Activated T-helper 1 cell treated with anti-CD3 and anti-CD28 coated beads, Interleukin-12 subunit alpha, Interleukin-12 subunit beta, Interleukin-2, Interleukin-4 antibody, amounts not matched to agents 30 ng/mL and 10 ng/mL and 1 ng/mL, durations not matched to agents 14 hours and 24 hours and 36 hours (primary cell): ENCODE measurements at regions of chr17 and their contacts with region 1.

Region 1: DNA sequence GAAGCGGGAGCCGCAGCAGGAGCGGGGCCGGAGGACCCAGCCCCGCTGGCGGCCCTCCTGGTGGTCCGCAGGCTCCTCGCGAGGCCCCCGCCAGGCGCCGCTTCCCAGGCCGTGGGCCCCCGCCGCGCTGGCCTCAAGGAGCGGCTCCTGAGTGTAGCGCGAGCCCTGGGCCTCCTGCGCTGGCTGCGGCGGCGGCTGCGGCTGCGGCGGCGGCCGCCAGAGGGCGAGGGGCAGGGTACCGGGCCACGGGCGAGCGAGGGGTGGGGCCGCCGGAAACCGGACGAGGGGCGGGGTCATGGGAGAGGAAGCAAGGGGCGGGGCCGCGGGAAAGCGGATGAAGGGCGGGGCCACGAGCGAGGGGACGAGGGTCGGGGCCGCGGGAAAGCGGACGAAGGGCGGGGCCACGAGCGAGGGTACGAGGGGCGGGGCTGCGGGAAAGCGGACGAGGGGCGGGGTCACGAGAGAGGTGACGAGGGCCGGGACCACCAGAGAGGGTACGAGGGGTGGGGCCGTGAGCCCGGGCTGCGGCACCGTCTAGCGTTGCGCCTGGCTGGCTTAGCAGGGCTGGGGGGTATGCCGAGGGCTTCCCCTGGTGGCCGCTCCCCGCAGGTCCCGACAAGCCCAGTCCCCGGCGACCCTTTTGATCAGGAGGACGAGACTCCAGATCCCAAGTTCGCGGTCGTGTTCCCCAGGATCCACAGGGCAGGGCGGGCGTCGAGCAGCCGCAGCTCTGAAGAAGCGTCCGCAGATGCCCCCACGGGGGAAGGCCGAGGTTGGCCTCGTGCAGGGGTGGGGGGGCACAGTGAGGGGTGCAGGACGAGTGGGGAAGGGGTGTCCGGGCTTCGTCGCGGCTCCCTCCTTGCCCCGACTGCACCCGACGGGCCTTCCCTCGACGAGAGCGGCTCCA is 1.7 kb downstream of the MYO15B start:
- DNase-seq: peak; percentile 88
- H3K4me3 Mint-ChIP-seq: peak overlapping the region; percentile 78
- H3K27ac Mint-ChIP-seq: peak overlapping the region; percentile 77
- H3K4me1 Mint-ChIP-seq: no peaks in the 10 kb centered on the region
- H3K27me3 Mint-ChIP-seq: peaks cover 17% of the 10 kb centered on the region

Region 2: GRCh38 chr17:75430159-75430974 is 158.9 kb before region 1 on chr17:
- intact Hi-C with region 1: loop called (anchors 1 kb)
- DNase-seq: no peak
- H3K4me3 Mint-ChIP-seq: no peak overlapping the region
- H3K27ac Mint-ChIP-seq: no peak overlapping the region
- H3K4me1 Mint-ChIP-seq: peaks cover 9% of the 10 kb centered on the region
- H3K27me3 Mint-ChIP-seq: peaks cover 20% of the 10 kb centered on the region

Region 3: DNA sequence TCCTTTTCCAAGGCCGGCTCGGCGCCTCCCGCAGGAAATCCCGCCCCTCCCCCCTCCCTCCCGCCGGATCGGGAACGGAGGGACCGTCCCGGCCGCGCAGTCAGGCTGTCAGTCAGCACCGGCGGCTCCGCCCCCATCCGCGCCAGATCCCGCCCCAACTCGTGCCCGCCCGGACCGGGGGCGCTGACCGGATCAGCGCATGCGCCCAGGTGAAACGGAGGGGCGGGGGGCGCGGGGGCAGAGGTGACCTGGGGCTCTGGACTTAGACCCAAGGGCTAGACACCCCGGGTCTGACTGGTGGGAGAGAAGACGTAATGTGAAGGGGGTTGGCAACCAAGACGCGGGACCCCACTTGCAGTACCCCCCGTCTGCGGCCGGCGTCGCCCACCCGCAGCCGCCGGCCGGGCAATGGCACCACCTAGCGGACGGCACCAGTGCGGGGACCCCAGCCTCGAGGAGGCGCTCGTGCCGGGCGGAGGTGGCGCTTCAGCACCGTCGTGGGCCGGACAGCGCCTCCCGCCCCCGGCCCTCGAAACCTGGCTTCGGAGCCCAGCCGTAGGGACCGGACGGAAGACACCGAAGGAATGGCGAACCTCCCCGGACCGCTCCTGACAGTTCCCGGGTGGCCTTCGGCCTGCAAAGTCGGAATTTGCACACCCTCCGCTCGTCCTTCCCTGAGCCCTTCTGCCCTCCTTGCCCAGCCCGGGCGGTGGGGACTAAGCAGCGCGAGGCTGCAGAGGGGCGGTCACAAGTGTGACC is 73.6 kb before region 1 on chr17 and contains the start of gene CASKIN2:
- intact Hi-C with region 1: loop called (anchors 1 kb)
- DNase-seq: peak; percentile 62
- H3K4me3 Mint-ChIP-seq: peak within 1 kb of the TSS; percentile 78
- H3K27ac Mint-ChIP-seq: no peak within 1 kb of the TSS
- H3K4me1 Mint-ChIP-seq: peaks cover 18% of the 10 kb centered on the region
- H3K27me3 Mint-ChIP-seq: peaks cover 17% of the 10 kb centered on the region
- total RNA-seq, gene CASKIN2: 0.88 and 2.0 TPM in 2 replicates

Region 4: GRCh38 chr17:75576661-75577060 is 12.6 kb before region 1 on chr17:
- intact Hi-C with region 1: loop called (anchors 1 kb)
- DNase-seq: no peak
- H3K4me3 Mint-ChIP-seq: no peak overlapping the region
- H3K27ac Mint-ChIP-seq: no peak overlapping the region
- H3K4me1 Mint-ChIP-seq: peaks cover 8% of the 10 kb centered on the region
- H3K27me3 Mint-ChIP-seq: peaks cover 12% of the 10 kb centered on the region

Region 5: DNA sequence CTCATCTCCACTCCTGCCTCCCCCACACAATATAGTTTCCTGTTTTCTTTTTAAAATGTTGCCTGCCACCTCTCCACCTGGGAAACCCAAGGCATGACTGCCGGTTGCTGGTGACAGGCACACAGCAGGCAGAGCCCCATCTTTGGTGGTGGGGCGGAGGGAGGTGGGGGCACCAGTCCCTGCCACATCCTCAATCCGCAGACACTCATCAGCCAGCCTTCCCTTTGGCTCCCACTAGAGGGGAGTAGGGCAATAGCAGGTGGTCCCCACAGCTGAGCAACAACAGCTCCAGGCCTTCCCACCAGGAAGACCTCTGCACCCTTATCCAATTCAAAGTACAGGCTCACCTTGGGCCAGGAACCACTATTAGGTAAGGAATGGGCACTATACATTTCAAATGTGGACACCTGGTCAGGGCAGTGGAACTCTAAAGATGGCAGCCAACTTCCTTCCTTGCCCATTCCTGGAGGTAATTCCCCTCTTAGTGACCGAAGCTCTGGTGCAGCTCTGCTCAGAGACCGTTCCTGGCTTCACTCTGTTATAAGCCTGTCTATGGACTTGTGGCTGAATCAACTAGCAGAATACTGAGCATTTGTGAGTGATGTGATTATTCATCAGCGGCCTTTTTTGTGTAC is 63.8 kb after region 1 on chr17:
- intact Hi-C with region 1: no loop called
- DNase-seq: no peak
- H3K4me3 Mint-ChIP-seq: no peak overlapping the region
- H3K27ac Mint-ChIP-seq: no peak overlapping the region
- H3K4me1 Mint-ChIP-seq: no peaks in the 10 kb centered on the region
- H3K27me3 Mint-ChIP-seq: no peaks in the 10 kb centered on the region

Region 6: GRCh38 chr17:75749545-75750389 is 160.5 kb after region 1 on chr17:
- intact Hi-C with region 1: loop called (anchors 1 kb)
- DNase-seq: peak; percentile 77
- H3K4me3 Mint-ChIP-seq: no peak overlapping the region
- H3K27ac Mint-ChIP-seq: no peak overlapping the region
- H3K4me1 Mint-ChIP-seq: peaks cover 16% of the 10 kb centered on the region
- H3K27me3 Mint-ChIP-seq: peaks cover 12% of the 10 kb centered on the region

Region 7: DNA sequence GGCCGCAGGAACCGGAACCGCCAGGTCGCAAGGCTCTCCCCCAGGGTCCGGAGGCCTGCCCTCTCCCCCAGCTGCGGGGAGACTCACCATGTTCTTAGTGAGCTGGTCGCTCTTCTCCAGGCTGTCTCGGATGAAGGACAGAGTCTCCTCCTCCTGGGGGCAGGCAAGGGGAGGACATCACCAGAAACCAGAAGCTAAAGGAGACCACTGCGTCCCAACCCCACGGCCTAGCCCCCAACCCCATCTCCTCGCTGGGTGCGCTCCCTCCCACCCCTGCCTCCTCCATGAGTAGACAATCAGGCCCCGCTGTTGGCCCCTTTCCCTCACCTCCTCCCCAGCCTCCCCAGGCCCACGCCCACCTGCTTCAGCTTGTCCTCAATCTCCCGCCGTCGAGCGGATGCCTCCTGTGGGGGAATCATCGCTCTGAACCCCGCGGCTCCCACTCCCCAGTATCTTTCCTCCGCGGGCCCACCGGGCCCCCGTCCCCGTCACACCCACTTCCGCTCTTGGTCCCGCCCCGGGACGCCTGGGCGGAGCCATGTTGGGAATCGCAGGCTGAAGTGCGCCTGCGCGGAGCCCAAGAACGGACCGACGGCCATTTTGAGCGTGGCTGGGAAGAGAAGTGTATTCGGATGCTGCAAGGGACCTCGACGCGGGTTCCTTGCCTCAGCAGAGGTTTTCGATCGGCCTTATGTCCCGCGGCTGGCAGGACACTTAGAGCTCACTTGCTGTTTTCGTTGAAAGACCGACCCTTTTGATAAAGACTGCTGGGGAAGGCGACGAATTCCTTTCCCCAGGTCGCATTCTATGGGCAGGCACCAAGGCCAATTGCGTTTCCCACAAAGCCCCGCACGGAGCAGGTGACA is 514.2 kb after region 1 on chr17 and contains the start of gene EXOC7:
- intact Hi-C with region 1: no loop called
- DNase-seq: peak; percentile 93
- H3K4me3 Mint-ChIP-seq: peak within 1 kb of the TSS; percentile 96
- H3K27ac Mint-ChIP-seq: peak within 1 kb of the TSS; percentile 93
- H3K4me1 Mint-ChIP-seq: peaks cover 15% of the 10 kb centered on the region
- H3K27me3 Mint-ChIP-seq: peaks cover under 1% of the 10 kb centered on the region
- total RNA-seq, gene EXOC7: 108 and 116 TPM in 2 replicates